ENCODE measurements at regions of chr5 and their contacts with region 1.

Region 1: GRCh38 chr5:36606428-36607113 is at the start of gene SLC1A3:
- DNase-seq: peak; percentile 83 to 87
- H3K4me3 ChIP-seq: peak within 1 kb of the TSS; percentile 40
- H3K4me3 Mint-ChIP-seq: peak within 1 kb of the TSS; percentile 98
- H3K27ac Mint-ChIP-seq: peak within 1 kb of the TSS; percentile 91
- H3K4me1 ChIP-seq: peaks cover 55% of the 10 kb centered on the region
- H3K4me1 Mint-ChIP-seq: peaks cover 27% of the 10 kb centered on the region
- H3K27me3 ChIP-seq: no peaks in the 10 kb centered on the region
- H3K27me3 Mint-ChIP-seq: no peaks in the 10 kb centered on the region
- CTCF ChIP-seq: no peak
- total RNA-seq, gene SLC1A3: 178 and 195 TPM in 2 replicates

Region 2: DNA sequence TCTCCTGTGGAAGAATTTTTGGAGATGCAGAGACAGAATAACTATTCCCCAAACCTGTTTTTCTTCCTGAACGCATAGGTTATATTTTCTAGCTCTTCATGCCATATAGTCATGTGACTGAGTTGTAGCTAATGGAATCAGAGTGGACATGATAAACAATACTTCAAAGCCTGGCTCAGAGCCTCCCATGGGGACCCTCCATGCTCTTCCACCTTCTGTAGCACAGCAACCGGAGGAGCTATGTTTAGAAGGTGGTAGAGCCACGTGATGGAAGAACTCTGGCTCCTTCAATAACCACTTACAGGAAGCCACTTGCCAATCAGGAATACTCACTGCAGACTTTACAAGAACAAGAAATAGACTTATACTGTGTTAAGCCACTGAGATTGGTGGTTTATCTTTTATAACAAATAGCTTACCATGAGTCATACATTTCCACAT is 404.0 kb before region 1 on chr5:
- CTCF ChIA-PET with region 1: no interaction called
- POLR2A ChIA-PET with region 1: no interaction called
- intact Hi-C with region 1: no loop called
- DNase-seq: no peak
- H3K4me3 ChIP-seq: no peak overlapping the region
- H3K4me3 Mint-ChIP-seq: no peak overlapping the region
- H3K27ac Mint-ChIP-seq: no peak overlapping the region
- H3K4me1 ChIP-seq: no peaks in the 10 kb centered on the region
- H3K4me1 Mint-ChIP-seq: no peaks in the 10 kb centered on the region
- H3K27me3 ChIP-seq: no peaks in the 10 kb centered on the region
- H3K27me3 Mint-ChIP-seq: no peaks in the 10 kb centered on the region
- CTCF ChIP-seq: no peak

Region 3: DNA sequence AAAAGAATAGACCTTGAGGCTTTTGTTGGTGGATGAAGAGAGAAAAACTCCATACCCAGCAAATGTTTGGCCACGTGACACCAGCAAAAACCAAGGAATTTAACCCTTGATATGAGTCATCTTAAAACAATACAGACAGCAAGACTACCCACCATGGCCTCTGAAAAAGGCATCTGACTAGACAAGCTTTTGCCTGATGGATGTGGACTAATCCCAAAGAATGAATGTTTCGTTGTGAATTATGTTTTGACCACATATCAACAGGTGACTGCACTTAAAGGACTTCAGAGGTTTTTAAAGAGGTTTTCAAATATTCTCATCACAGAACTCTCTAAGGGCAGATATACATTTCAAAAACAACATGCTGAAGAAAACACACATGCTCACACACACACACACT is 33.1 kb before region 1 on chr5:
- CTCF ChIA-PET with region 1: no interaction called
- POLR2A ChIA-PET with region 1: no interaction called
- intact Hi-C with region 1: no loop called
- DNase-seq: no peak
- H3K4me3 ChIP-seq: no peak overlapping the region
- H3K4me3 Mint-ChIP-seq: no peak overlapping the region
- H3K27ac Mint-ChIP-seq: no peak overlapping the region
- H3K4me1 ChIP-seq: no peaks in the 10 kb centered on the region
- H3K4me1 Mint-ChIP-seq: no peaks in the 10 kb centered on the region
- H3K27me3 ChIP-seq: no peaks in the 10 kb centered on the region
- H3K27me3 Mint-ChIP-seq: no peaks in the 10 kb centered on the region
- CTCF ChIP-seq: no peak

Region 4: DNA sequence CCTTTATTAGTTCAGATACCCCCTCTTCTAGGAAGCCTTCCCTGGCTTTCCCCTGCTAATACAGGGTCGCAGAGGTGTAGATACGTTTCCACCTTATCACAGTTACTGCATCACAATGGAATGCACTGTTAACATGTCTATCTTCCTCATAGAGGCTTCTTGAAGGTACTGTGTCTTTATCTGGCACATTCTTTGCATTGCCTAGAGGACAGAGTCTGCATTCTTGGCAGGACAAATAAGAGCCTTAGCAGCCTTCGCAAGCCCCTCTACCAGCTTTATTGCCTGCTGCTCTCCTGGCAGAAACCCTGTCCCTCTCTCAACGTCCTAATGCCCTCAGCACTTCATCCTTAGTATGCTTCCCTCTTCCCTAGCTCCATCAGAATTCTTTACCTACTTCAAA is 31.5 kb after region 1 on chr5:
- CTCF ChIA-PET with region 1: no interaction called
- POLR2A ChIA-PET with region 1: no interaction called
- intact Hi-C with region 1: loop called (anchors 1 kb)
- DNase-seq: peak; percentile 78 to 90
- H3K4me3 ChIP-seq: no peak overlapping the region
- H3K4me3 Mint-ChIP-seq: peak overlapping the region; percentile 48
- H3K27ac Mint-ChIP-seq: peak overlapping the region; percentile 83
- H3K4me1 ChIP-seq: peaks cover 78% of the 10 kb centered on the region
- H3K4me1 Mint-ChIP-seq: peaks cover 68% of the 10 kb centered on the region
- H3K27me3 ChIP-seq: no peaks in the 10 kb centered on the region
- H3K27me3 Mint-ChIP-seq: no peaks in the 10 kb centered on the region
- CTCF ChIP-seq: no peak

Region 5: DNA sequence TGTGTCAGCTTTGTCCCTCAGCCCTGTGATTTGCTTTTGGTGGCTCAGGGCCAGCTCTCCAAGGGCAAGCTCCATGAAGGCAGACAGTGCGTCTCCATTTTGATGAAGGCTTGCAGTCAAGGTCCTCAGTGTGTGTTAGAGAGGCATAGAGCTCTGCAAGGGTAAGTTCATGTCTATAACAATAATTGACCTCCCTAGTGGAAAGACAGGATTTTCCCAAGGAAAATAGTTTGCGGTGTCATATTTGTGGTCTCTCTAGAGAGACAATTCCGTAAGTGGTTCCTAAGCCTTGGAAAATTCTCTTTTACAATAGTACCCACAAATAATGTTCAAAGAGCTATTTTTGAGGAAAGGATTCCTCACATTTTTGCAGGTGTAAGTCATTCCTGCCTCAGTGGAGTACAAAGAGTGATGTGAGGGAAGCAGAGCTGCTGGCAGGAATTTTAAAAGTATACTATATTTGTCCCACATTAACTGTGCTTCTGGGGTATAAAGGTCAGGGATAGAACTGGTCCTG is 40.0 kb after region 1 on chr5:
- CTCF ChIA-PET with region 1: no interaction called
- POLR2A ChIA-PET with region 1: interaction called, 3 read pairs
- intact Hi-C with region 1: loop called (anchors 1 kb)
- DNase-seq: peak in 1 of 2 experiments; percentile 33
- H3K4me3 ChIP-seq: no peak overlapping the region
- H3K4me3 Mint-ChIP-seq: peak overlapping the region; percentile 53
- H3K27ac Mint-ChIP-seq: peak overlapping the region; percentile 81
- H3K4me1 ChIP-seq: peaks cover 91% of the 10 kb centered on the region
- H3K4me1 Mint-ChIP-seq: peaks cover 42% of the 10 kb centered on the region
- H3K27me3 ChIP-seq: no peaks in the 10 kb centered on the region
- H3K27me3 Mint-ChIP-seq: no peaks in the 10 kb centered on the region
- CTCF ChIP-seq: no peak

Region 6: DNA sequence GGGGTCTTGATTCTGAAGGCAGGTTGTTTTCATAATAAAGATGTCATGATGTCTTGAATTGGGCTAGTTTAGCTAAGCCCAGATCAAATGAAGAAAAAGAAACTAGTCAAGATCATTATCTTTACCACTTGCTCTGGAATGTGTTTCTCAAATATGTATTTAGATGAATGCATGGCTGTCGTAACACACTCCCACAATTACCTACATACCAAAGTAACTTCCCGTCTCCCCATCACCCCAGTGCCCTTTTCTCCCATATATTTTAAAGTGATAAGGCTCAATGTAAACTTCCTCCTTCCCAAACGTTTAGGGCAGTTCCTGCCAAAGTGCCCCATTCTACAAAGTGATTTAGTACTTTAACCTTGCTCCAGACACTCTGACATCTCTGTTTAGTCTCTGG is 61.2 kb after region 1 on chr5:
- CTCF ChIA-PET with region 1: no interaction called
- POLR2A ChIA-PET with region 1: no interaction called
- intact Hi-C with region 1: loop called (anchors 1 kb)
- DNase-seq: peak; percentile 62 to 79
- H3K4me3 ChIP-seq: no peak overlapping the region
- H3K4me3 Mint-ChIP-seq: peak overlapping the region; percentile 15
- H3K27ac Mint-ChIP-seq: peak overlapping the region; percentile 55
- H3K4me1 ChIP-seq: peaks cover 60% of the 10 kb centered on the region
- H3K4me1 Mint-ChIP-seq: peaks cover 33% of the 10 kb centered on the region
- H3K27me3 ChIP-seq: no peaks in the 10 kb centered on the region
- H3K27me3 Mint-ChIP-seq: no peaks in the 10 kb centered on the region
- CTCF ChIP-seq: no peak

Region 7: DNA sequence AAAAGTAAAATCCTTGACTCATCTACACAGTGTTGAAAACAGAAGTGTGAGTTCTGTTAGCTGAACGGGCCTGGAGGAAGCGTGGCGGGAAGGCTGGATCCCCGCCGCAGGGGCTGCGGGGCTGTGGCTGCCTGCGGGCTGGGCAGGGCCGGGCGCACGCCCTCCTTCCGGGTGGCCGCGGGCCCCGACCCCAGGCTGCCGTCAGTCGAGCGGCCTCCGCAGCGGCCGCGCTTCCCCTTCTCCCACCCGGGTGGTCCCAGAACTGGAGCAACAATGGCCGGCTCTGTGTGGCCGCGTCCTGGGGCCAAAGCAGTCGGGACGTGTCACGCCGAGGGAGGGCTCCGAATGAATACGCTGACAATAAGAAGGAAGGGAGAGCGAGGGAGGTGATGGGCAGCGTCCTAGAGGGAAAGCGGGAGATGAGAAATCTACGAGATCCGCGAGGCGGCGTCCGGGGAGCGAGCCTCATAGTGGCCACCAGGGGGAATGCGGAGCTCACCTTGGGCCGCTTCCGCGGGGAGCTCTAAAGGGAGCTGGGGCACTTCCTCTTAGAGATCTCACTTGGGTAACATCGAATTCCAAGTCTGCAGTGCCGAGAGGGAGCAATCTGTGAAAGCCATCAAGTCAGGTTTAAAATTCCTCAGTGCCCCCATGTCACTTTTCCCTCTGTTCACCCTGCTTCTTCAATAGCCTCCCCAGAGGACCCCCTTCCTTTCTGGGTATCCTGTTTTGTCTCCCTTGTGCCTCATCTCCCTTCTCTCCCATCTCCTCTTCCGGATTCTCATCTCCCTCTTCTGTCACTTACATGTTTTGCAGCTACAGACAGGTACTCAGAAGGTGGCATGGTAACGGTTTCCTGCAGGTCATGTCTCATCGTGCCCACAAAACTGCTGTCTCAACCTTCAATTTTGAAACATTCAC is 83.7 kb after region 1 on chr5:
- CTCF ChIA-PET with region 1: interaction called, 14 read pairs
- POLR2A ChIA-PET with region 1: interaction called, 3 read pairs
- intact Hi-C with region 1: loop called (anchors 1 kb)
- DNase-seq: peak; percentile 90 to 91
- H3K4me3 ChIP-seq: peak overlapping the region; percentile 71
- H3K4me3 Mint-ChIP-seq: peak overlapping the region; percentile 75
- H3K27ac Mint-ChIP-seq: peak overlapping the region; percentile 28
- H3K4me1 ChIP-seq: peaks cover 14% of the 10 kb centered on the region; the same call in 1 of the 2 replicates
- H3K4me1 Mint-ChIP-seq: peaks cover 10% of the 10 kb centered on the region
- H3K27me3 ChIP-seq: no peaks in the 10 kb centered on the region
- H3K27me3 Mint-ChIP-seq: no peaks in the 10 kb centered on the region
- CTCF ChIP-seq: peak; percentile 80 to 91

Region 8: DNA sequence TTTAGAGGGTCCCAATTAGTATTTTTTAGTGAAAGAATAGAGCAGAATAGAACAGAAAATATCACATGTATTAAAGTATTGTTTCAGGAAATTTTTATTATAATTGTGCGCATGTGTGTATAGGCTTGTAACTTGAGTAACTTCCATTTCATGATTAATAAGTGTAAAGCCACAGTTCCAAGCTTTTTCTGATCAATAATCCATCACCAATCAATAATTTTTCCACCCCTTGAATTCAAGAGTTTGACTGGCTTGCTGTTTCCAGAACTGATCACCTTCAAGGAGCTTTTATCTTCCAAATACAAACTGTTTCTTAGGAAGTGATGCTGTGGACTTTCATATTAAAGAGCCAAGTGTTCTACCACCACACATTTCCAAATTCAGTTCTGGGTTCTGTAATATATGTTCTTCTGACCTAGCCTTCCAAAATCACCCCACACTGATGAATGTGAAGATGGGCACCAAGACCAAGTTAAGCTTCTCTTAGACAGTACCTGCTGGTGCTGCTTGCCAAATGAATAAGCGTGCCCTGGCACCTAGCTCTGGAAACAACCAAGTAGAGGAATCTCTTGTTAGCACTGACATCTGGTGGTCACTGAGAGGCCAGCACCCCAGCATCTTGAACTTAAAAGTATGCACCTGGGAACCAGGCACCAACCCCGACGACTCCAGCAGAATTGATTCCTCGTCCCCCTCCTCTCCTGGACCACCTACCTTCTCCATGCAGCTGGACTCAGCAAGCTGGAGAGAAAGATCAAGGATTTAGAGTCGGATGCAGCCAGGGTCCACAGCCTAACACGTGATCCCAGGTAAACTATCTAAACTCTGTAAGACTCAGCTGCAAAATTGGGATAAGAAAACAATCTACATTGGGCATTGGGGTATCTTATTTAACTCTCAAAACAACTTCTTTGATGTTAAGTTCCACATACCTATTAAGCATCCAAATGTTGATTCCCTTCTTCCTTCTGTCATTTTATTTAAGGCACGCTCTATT is 89.4 kb after region 1 on chr5:
- CTCF ChIA-PET with region 1: interaction called, 14 read pairs
- POLR2A ChIA-PET with region 1: interaction called, 7 read pairs
- intact Hi-C with region 1: loop called (anchors 1 kb)
- DNase-seq: peak; percentile 71 to 76
- H3K4me3 ChIP-seq: no peak overlapping the region
- H3K4me3 Mint-ChIP-seq: no peak overlapping the region
- H3K27ac Mint-ChIP-seq: no peak overlapping the region
- H3K4me1 ChIP-seq: peaks cover 24% of the 10 kb centered on the region
- H3K4me1 Mint-ChIP-seq: peaks cover 41% of the 10 kb centered on the region
- H3K27me3 ChIP-seq: no peaks in the 10 kb centered on the region
- H3K27me3 Mint-ChIP-seq: no peaks in the 10 kb centered on the region
- CTCF ChIP-seq: peak; percentile 84 to 92

Region 9: DNA sequence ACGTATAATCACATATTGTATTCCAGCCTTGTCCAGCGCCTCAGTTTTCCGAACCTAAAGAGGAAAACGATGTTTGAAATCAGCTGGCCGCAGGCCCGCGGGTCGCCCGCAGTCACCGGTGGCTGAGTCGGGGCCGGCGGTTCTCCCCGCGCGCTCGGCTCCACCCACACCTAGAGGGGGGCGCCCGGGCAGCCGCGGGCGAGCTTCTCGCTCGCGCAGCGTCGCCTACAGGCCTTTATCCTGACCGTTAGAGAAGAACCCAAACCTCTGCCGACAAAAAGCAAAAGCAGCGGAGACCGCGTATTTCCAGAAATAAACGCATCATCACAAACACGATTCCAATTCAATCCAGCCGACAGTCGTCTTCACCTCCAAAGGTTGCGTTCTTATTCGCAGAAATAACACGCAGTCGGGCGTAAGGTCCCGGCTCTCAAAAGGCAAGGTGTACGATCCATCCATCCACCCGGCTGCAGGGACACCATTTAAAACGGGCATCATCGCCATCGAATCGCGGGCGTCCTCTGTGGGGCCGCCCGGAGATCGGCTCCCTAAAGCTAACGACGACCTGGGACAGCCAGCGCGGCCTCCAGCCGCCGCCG is 269.3 kb after region 1 on chr5:
- CTCF ChIA-PET with region 1: no interaction called
- POLR2A ChIA-PET with region 1: no interaction called
- intact Hi-C with region 1: loop called (anchors 10 kb)
- DNase-seq: peak; percentile 78 to 82
- H3K4me3 ChIP-seq: peak overlapping the region; percentile 52
- H3K4me3 Mint-ChIP-seq: peak overlapping the region; percentile 93
- H3K27ac Mint-ChIP-seq: peak overlapping the region; percentile 95
- H3K4me1 ChIP-seq: peaks cover 30% of the 10 kb centered on the region
- H3K4me1 Mint-ChIP-seq: peaks cover 13% of the 10 kb centered on the region
- H3K27me3 ChIP-seq: no peaks in the 10 kb centered on the region
- H3K27me3 Mint-ChIP-seq: no peaks in the 10 kb centered on the region
- CTCF ChIP-seq: peak in 1 of 2 experiments; percentile 64

Measured in Caco-2 (cell line).